ENCODE measurements at regions of chr16 and their contacts with region 1.

Region 1: GRCh38 chr16:31073968-31074813 is at the starts of genes ZNF646 and ZNF668:
- DNase-seq: peak; percentile 94 to 100 (median 97)
- ATAC-seq: peak; percentile 82
- H3K4me3 ChIP-seq: peak within 1 kb of the TSS; percentile 67 to 83
- H3K4me3 Mint-ChIP-seq: peak within 1 kb of the TSS; percentile 96
- H3K27ac ChIP-seq: peak within 1 kb of the TSS; percentile 88 to 95
- H3K27ac Mint-ChIP-seq: peak within 1 kb of the TSS; percentile 97
- H3K4me1 ChIP-seq: peaks cover 27% of the 10 kb centered on the region
- H3K4me1 Mint-ChIP-seq: peaks cover 40% of the 10 kb centered on the region
- H3K27me3 ChIP-seq: no peaks in the 10 kb centered on the region
- H3K27me3 Mint-ChIP-seq: no peaks in the 10 kb centered on the region
- CTCF ChIP-seq: no peak
- total RNA-seq, gene ZNF646: 16.6 to 18.7 TPM
- total RNA-seq, gene ZNF668: 10.1 to 11.1 TPM

Region 2: DNA sequence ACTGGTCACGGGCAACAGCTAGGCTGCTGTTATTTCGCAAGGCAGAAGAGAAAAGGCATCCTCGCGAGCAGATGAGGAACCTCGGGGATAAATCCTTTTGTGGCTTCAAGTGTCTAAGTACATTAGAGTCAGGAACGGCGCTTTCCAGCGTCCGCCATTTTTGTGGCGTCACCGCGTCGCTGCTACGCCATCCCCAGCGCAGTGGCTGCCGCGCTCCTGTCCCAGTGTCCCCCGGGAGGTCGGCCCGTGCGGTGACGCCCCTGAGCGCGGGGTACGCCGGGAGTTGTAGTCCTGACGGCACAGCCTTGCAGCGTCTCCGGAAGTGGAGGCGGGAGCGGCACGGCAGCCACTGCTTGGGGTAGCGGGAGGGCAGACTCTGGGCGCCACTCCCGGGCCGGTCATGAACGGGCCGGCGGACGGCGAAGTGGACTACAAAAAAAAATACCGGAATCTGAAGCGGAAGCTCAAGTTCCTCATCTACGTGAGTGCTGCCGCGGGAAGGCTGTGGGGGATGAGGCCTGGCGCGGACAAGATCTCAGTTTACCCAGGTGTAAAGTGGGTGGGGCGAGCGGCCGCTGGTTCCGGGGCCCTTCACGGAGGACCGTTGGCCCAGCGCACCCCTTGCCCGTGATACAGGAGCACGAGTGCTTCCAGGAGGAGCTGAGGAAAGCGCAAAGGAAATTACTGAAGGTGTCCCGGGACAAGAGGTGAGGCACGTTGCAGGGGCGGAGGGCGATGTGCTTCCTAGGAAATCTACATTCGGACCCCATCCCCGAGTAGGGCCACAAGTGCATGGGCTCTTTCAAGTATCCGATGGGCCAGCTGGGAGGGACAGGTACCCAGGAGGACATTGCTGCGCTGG is 1078.0 kb before region 1 on chr16 and contains the start of gene INO80E:
- CTCF ChIA-PET with region 1: no interaction called
- POLR2A ChIA-PET with region 1: no interaction called
- intact Hi-C with region 1: loop called in 1 of 2 experiments (anchors 5 kb)
- DNase-seq: peak; percentile 98 to 100 (median 99)
- ATAC-seq: peak; percentile 96
- H3K4me3 ChIP-seq: peak within 1 kb of the TSS; percentile 93 to 100
- H3K4me3 Mint-ChIP-seq: peak within 1 kb of the TSS; percentile 94
- H3K27ac ChIP-seq: peak within 1 kb of the TSS; percentile 99
- H3K27ac Mint-ChIP-seq: peak within 1 kb of the TSS; percentile 97
- H3K4me1 ChIP-seq: peaks cover 14% of the 10 kb centered on the region
- H3K4me1 Mint-ChIP-seq: peaks cover 39% of the 10 kb centered on the region
- H3K27me3 ChIP-seq: no peaks in the 10 kb centered on the region
- H3K27me3 Mint-ChIP-seq: no peaks in the 10 kb centered on the region
- CTCF ChIP-seq: no peak
- total RNA-seq, gene INO80E: 49.8 to 59.4 TPM

Region 3: DNA sequence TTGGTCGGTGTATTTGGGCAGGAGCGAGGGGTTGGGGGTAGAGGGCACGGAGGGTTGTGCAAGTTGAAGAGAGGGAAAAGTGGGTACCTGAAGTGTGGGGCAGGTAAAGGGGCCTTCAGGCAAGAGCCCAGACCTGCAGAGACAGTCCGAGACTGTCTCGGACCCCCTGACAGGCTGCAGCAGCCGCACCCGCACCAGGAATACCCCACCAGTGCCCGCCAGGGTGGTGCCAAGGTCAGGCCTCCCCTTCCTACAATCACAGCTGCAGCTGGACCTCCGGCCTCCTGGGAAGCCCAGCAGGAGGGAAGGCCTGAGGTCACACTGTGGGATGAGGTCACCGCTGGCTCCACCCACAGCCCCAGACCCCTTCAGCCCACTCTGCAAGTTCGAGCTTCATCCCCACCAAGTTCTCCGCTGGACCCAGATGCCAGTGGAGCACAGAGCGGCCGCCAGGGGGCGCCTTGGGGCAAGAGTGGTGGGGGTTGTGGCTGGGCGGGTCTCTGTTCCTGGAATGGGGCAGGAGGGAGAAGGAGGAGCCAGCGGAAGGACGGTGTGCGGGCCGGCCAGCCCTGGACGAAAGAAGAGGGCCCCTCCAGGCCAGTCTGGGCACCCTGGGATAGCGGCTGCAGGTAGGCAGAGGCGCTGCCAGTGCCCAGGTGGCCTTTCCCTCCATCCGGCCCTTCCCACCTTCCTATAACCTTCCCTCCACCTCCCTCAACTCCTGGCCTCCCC is 89.4 kb before region 1 on chr16 and contains the start of gene HSD3B7:
- CTCF ChIA-PET with region 1: interaction called, 9 read pairs
- POLR2A ChIA-PET with region 1: no interaction called
- intact Hi-C with region 1: loop called in 1 of 2 experiments (anchors 1 kb)
- DNase-seq: peak; percentile 55 to 90 (median 78)
- ATAC-seq: peak; percentile 85
- H3K4me3 ChIP-seq: no peak within 1 kb of the TSS
- H3K4me3 Mint-ChIP-seq: no peak within 1 kb of the TSS
- H3K27ac ChIP-seq: no peak within 1 kb of the TSS
- H3K27ac Mint-ChIP-seq: no peak within 1 kb of the TSS
- H3K4me1 ChIP-seq: peaks cover 3% of the 10 kb centered on the region
- H3K4me1 Mint-ChIP-seq: peaks cover 4% of the 10 kb centered on the region
- H3K27me3 ChIP-seq: no peaks in the 10 kb centered on the region
- H3K27me3 Mint-ChIP-seq: no peaks in the 10 kb centered on the region
- CTCF ChIP-seq: peak; percentile 77
- total RNA-seq, gene HSD3B7: 0.19 to 0.25 TPM

Region 4: GRCh38 chr16:31032736-31033708 is 41.2 kb before region 1 on chr16 and contains the start of gene STX4:
- CTCF ChIA-PET with region 1: no interaction called
- POLR2A ChIA-PET with region 1: interaction called, 26 read pairs
- intact Hi-C with region 1: loop called (anchors 1 kb)
- DNase-seq: peak; percentile 93 to 100 (median 97)
- ATAC-seq: peak; percentile 73
- H3K4me3 ChIP-seq: peak within 1 kb of the TSS; percentile 84 to 88
- H3K4me3 Mint-ChIP-seq: peak within 1 kb of the TSS; percentile 98
- H3K27ac ChIP-seq: peak within 1 kb of the TSS; percentile 98 to 99
- H3K27ac Mint-ChIP-seq: peak within 1 kb of the TSS; percentile 99
- H3K4me1 ChIP-seq: peaks cover 18% of the 10 kb centered on the region
- H3K4me1 Mint-ChIP-seq: peaks cover 28% of the 10 kb centered on the region
- H3K27me3 ChIP-seq: no peaks in the 10 kb centered on the region
- H3K27me3 Mint-ChIP-seq: no peaks in the 10 kb centered on the region
- CTCF ChIP-seq: no peak
- total RNA-seq, gene STX4: 63.8 to 69.9 TPM

Region 5: DNA sequence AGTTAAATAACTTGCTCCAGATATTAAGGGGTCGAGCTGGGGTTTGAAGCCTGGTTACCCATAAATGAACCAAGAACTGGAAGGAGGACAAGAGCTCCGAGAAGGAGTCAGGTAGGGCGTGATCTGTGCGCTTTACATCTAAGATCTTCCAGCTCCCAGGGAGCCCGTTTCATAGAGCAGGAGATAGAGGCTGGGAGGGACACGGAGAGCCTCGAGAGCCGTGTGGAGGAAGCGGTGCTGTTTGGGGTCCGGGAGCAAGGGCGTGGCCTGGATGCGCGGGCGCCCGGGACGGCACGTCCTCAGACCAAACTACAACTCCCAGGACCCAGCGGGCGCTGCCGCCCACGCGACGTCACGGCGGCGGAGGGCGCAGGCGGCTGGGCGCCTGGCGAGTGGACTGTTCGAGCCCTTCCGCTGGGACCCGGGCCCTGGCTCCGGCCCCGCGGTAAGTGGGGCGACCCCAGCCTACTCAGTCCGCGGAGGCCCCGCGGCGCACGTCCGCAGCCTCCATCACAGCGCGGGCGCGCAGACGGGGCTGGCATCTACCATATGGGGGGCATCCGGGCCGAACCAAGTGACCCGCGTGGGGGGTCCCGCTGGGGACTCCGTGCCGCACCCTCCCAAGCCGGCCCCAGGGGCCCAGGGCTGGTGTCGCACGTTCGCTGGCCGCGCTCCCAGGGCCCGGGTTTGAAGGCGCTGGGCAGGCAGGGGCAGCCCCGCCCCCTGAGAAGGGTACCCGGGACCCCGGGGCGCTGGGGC is 34.0 kb after region 1 on chr16 and contains the start of gene BCKDK:
- CTCF ChIA-PET with region 1: no interaction called
- POLR2A ChIA-PET with region 1: interaction called, 3 read pairs
- intact Hi-C with region 1: loop called in 1 of 2 experiments (anchors 2 kb)
- DNase-seq: peak; percentile 9 to 76 (median 58)
- ATAC-seq: peak; percentile 67
- H3K4me3 ChIP-seq: peak within 1 kb of the TSS; percentile 50 to 96
- H3K4me3 Mint-ChIP-seq: peak within 1 kb of the TSS; percentile 87
- H3K27ac ChIP-seq: peak within 1 kb of the TSS; percentile 54 to 64
- H3K27ac Mint-ChIP-seq: peak within 1 kb of the TSS; percentile 84
- H3K4me1 ChIP-seq: peaks cover 15% of the 10 kb centered on the region
- H3K4me1 Mint-ChIP-seq: peaks cover 17% of the 10 kb centered on the region
- H3K27me3 ChIP-seq: no peaks in the 10 kb centered on the region
- H3K27me3 Mint-ChIP-seq: no peaks in the 10 kb centered on the region
- CTCF ChIP-seq: no peak
- total RNA-seq, gene BCKDK: 5.6 to 7.6 TPM

Region 6: DNA sequence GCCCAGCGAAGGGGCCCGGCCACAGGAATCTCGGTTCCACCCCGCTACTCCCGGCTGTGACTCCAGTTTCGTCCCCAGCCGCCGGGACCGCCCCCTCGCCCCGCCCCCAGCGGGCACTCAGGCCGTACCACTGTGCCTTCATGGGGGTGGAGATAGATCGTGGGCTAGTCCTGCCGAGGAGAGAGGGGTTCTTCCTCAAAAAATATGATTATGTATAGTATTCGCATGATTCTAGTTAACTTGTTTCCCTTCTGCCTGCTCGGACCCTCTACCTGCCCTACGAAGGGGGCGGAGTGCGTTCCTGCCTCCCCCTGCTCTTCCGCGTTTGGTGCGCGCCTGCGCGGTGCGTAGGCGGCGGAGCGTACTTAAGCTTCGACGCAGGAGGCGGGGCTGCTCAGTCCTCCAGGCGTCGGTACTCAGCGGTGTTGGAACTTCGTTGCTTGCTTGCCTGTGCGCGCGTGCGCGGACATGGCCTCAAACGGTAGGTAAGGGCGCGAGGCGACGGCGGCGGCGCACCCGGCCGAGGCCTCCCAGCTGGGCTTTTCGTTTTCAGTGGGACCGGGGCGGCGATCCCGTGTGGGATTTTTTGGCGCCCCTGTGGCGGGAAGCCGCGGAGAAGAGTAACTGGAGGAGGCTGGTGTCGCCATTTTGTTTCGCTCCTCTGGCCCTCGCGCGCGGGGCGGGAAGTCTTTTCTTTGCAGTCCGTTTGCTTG is 105.7 kb after region 1 on chr16 and contains the start of gene FUS:
- CTCF ChIA-PET with region 1: no interaction called
- POLR2A ChIA-PET with region 1: interaction called, 21 read pairs
- intact Hi-C with region 1: loop called (anchors 1 kb)
- DNase-seq: peak; percentile 86 to 97 (median 90)
- ATAC-seq: peak; percentile 73
- H3K4me3 ChIP-seq: peak within 1 kb of the TSS; percentile 80 to 90
- H3K4me3 Mint-ChIP-seq: peak within 1 kb of the TSS; percentile 98
- H3K27ac ChIP-seq: peak within 1 kb of the TSS; percentile 88 to 95
- H3K27ac Mint-ChIP-seq: peak within 1 kb of the TSS; percentile 99
- H3K4me1 ChIP-seq: peaks cover 63% of the 10 kb centered on the region
- H3K4me1 Mint-ChIP-seq: peaks cover 60% of the 10 kb centered on the region
- H3K27me3 ChIP-seq: no peaks in the 10 kb centered on the region
- H3K27me3 Mint-ChIP-seq: no peaks in the 10 kb centered on the region
- CTCF ChIP-seq: no peak
- total RNA-seq, gene FUS: 734 to 742 TPM

Region 7: DNA sequence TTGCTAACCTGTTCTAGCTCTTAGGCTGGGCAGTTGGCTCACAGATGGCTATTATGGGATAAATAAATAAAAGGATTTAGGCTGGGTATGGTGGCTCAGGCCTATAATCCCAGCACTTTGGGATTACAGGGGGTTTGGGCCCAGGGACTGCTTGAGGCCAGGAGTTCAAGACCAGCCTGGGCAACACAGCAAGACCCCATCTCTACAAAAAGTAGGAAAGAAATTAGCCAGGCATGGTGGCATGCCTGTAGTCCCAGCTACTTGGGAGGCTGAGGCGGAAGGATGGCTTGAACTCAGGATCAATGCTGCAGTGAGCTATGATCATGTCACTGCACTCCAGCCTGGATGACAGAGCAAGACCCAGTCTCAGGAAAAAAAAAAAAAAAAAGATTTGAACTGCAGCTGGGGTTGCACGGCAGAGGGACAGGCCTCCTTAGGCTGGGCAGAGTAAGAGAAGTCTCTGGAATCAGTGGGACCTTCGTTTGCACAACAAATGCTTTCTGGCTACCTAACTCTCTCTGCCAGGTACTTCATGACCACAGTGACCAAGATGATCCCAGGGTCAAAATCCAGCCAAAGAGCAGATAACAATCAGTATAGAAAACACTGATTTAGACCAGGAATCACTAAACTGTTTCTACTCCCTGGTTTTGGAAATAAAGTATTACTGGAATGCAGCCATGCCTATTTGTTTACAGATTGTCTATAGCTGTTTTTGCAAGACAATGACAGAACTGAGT is 427.2 kb after region 1 on chr16:
- CTCF ChIA-PET with region 1: no interaction called
- POLR2A ChIA-PET with region 1: no interaction called
- intact Hi-C with region 1: no loop called
- DNase-seq: no peak
- ATAC-seq: no peak
- H3K4me3 ChIP-seq: no peak overlapping the region
- H3K4me3 Mint-ChIP-seq: no peak overlapping the region
- H3K27ac ChIP-seq: no peak overlapping the region
- H3K27ac Mint-ChIP-seq: no peak overlapping the region
- H3K4me1 ChIP-seq: peaks cover 7% of the 10 kb centered on the region
- H3K4me1 Mint-ChIP-seq: peaks cover 12% of the 10 kb centered on the region
- H3K27me3 ChIP-seq: no peaks in the 10 kb centered on the region
- H3K27me3 Mint-ChIP-seq: no peaks in the 10 kb centered on the region
- CTCF ChIP-seq: no peak

Region 8: DNA sequence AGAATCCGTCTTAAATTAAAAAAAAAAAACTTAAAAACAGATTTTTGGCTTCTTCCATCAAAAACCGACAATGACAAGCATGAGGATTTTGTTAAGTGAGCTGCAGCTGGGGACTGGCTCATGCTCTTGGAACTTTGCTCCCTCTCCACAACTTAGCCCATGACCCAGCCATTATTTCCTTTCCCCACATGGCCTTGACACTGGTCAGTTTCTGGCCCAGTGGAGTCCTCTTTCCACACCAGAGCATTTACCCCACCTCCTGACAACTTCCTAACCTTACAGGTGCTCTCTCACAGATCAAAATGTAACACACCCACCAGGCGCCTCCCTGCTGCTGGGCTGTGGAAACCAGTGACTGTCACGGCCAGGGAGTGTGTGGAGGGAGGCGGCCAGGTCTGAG is 736.7 kb after region 1 on chr16:
- CTCF ChIA-PET with region 1: no interaction called
- POLR2A ChIA-PET with region 1: no interaction called
- intact Hi-C with region 1: no loop called
- DNase-seq: no peak
- ATAC-seq: no peak
- H3K4me3 ChIP-seq: no peak overlapping the region
- H3K4me3 Mint-ChIP-seq: no peak overlapping the region
- H3K27ac ChIP-seq: no peak overlapping the region
- H3K27ac Mint-ChIP-seq: no peak overlapping the region
- H3K4me1 ChIP-seq: no peaks in the 10 kb centered on the region
- H3K4me1 Mint-ChIP-seq: no peaks in the 10 kb centered on the region
- H3K27me3 ChIP-seq: no peaks in the 10 kb centered on the region
- H3K27me3 Mint-ChIP-seq: peaks cover 8% of the 10 kb centered on the region
- CTCF ChIP-seq: no peak

Region 9: GRCh38 chr16:31868691-31869167 is 794.5 kb after region 1 on chr16:
- CTCF ChIA-PET with region 1: no interaction called
- POLR2A ChIA-PET with region 1: interaction called, 7 read pairs
- intact Hi-C with region 1: loop called in 1 of 2 experiments (anchors 10 kb)
- DNase-seq: peak; percentile 60 to 88 (median 82)
- ATAC-seq: peak; percentile 20
- H3K4me3 ChIP-seq: peak overlapping the region; percentile 33 to 48
- H3K4me3 Mint-ChIP-seq: peak overlapping the region; percentile 66
- H3K27ac ChIP-seq: peak overlapping the region; percentile 18 to 79
- H3K27ac Mint-ChIP-seq: peak overlapping the region; percentile 88
- H3K4me1 ChIP-seq: peaks cover 31% of the 10 kb centered on the region
- H3K4me1 Mint-ChIP-seq: peaks cover 47% of the 10 kb centered on the region
- H3K27me3 ChIP-seq: no peaks in the 10 kb centered on the region
- H3K27me3 Mint-ChIP-seq: no peaks in the 10 kb centered on the region
- CTCF ChIP-seq: peak; percentile 96